Esophagus muscularis mucosa (tissue), 4 donors: ENCODE measurements at regions of chr4 and their contacts with region 1.

Region 1: DNA sequence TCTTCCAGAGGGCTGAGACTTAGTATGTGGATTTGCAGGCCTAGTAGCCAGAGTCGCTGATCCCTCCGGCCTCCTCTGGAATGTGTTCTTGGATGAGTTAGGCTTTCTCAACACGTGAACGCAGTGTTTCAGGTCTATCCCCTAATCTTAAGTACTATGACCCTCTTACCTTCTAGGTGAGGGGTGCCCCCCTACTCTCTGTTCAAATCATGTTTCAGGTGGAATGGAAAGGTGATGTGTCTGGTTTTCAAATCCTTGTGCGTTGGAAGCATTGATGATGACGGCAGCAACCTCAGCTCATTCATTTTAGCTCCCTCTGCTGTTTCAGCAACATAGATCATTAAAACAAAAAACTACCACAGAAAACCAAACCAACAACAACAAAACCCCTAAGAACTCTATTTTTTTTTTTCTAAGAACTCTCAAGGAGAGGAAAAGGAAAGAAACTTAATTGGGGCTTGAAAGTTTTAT is 56.4 kb downstream of the RWDD4 start:
- DNase-seq: no peak
- H3K4me3 ChIP-seq: no peak overlapping the region
- H3K27ac ChIP-seq: peak overlapping the region in 2 of 4 donors; percentile 5 to 42
- H3K4me1 ChIP-seq: peaks cover 0 to 12% (median 11%) of the 10 kb centered on the region in 4 donors
- H3K27me3 ChIP-seq: no peaks in the 10 kb centered on the region
- CTCF ChIP-seq: peak; percentile 51 to 53 (median 52)
- EP300 ChIP-seq: no peak
- POLR2A ChIP-seq: no peak

Region 2: DNA sequence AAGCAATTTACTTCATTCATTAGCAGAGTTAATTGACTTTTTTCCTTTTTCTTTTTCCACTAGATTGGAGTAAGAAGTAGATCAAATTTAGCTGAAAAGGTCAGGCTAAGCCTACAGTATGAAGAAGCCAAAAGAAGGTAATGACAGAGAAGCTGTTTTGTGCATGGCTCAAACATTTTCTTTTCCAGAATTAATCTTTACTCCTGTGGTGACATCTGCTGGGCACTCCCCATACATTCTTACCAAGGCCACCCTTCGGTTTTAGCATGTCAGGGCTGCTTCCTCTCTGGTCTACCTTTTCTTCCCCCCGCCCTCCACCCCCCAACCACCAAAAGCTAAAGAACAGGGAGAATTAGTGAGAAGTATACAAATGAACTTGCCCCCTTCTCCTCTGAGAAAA is 352.7 kb before region 1 on chr4:
- intact Hi-C with region 1: no loop called
- DNase-seq: no peak
- H3K4me3 ChIP-seq: no peak overlapping the region
- H3K27ac ChIP-seq: no peak overlapping the region
- H3K4me1 ChIP-seq: peaks cover 0 to 9% (median 7%) of the 10 kb centered on the region in 4 donors
- H3K27me3 ChIP-seq: no peaks in the 10 kb centered on the region
- CTCF ChIP-seq: peak; percentile 32 to 44 (median 36)
- EP300 ChIP-seq: no peak
- POLR2A ChIP-seq: no peak

Region 3: DNA sequence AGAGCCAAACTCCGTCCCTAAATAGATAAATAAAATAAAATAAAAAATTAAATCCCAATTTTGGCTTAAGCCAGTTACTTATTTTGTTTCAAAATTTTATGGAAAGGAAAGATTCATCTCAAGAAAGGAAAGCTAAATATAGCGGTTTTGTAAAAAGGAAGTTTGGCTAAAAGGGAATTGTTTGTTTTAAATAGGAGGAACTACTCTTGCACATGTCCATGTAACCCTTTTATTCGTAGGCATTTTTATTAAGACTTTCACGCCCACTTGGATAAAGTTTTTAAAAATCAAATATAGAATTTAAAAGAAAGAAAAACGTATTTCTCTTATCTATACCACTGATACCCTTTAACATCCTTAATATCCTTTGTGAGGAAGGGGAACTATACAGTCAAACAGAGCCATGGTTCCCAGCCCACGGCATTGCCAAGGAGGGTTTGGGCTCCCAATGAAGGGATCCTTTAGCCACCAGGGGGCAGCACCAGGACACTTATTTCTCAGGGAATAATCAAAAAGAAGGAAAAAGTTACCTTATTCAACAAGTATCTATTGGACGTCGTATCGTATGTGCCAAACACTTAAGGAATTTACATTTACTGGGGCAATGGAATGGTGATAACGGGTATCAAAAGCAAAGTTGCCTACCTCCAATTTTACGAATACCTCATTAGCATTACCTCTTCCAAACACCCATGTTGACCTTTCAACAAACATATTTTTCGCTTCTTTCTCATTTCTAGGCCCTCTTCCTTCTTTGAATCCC is 130.5 kb before region 1 on chr4:
- intact Hi-C with region 1: loop called (anchors 5 kb)
- DNase-seq: peak; percentile 97
- H3K4me3 ChIP-seq: peak overlapping the region in 3 of 4 donors; percentile 1 to 25 (median 19)
- H3K27ac ChIP-seq: no peak overlapping the region
- H3K4me1 ChIP-seq: peaks cover 0 to 7% (median 2%) of the 10 kb centered on the region in 4 donors
- H3K27me3 ChIP-seq: peaks cover 0 to 4% (median 0%) of the 10 kb centered on the region in 4 donors
- CTCF ChIP-seq: peak; percentile 77 to 89 (median 89)
- EP300 ChIP-seq: no peak
- POLR2A ChIP-seq: no peak

Region 4: DNA sequence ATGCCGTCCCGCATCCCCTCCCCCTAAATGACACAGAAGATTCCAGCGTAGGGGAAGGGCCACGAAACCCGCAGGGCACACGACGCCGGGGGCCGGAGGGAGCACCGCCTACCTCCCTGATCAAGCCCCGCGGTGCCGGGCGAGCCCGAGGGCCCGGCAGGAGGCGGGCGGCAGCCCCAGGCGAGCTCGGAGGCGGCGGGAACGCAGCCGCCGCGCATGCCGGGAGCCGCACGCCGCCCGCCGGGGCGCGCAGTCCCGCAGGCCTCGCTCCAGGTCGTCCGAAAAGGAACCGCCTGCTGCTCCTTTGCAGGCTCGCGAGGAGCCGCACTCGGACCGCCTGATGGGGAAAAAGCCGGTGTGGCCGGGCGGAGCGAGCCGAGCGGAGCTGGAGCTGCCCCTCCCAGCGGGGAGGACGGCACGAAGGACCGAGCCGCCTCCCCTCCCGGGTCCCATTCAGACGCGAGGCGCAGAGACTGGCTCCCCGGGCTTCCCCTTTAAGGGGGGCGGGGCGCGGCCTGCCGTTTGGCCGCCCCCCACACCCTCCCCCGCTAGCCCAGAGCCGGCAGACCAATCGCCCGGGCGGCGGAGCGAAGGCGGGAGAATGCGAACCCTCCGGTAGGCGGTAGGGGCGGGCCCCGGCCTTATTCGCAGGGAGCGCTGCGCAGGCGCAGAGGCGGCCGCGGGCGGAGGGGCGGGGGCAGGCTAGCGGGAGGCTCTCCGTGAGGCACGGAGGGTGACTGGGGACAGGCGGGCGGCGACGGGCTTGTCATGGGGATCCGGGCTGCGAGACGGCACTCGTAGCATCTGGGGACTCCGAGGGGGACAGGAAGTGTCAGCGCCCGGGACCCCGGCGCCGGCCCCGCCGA is 98.3 kb before region 1 on chr4:
- intact Hi-C with region 1: loop called (anchors 5 kb)
- DNase-seq: peak; percentile 99
- H3K4me3 ChIP-seq: peak overlapping the region; percentile 75 to 100 (median 98)
- H3K27ac ChIP-seq: peak overlapping the region; percentile 96 to 99 (median 98)
- H3K4me1 ChIP-seq: peaks cover 8 to 46% (median 45%) of the 10 kb centered on the region in 4 donors
- H3K27me3 ChIP-seq: no peaks in the 10 kb centered on the region
- CTCF ChIP-seq: peak; percentile 39 to 49 (median 45)
- EP300 ChIP-seq: no peak
- POLR2A ChIP-seq: peak; percentile 54

Region 5: GRCh38 chr4:183860731-183861130 is 258.1 kb after region 1 on chr4:
- intact Hi-C with region 1: no loop called
- DNase-seq: peak; percentile 64
- H3K4me3 ChIP-seq: peak overlapping the region in 1 of 4 donors; percentile 6
- H3K27ac ChIP-seq: no peak overlapping the region
- H3K4me1 ChIP-seq: no peaks in the 10 kb centered on the region
- H3K27me3 ChIP-seq: no peaks in the 10 kb centered on the region
- CTCF ChIP-seq: no peak
- EP300 ChIP-seq: no peak
- POLR2A ChIP-seq: no peak